Esophagus squamous epithelium (tissue), 5 donors: ENCODE measurements at regions of chr15 and their contacts with region 1.

Region 1: DNA sequence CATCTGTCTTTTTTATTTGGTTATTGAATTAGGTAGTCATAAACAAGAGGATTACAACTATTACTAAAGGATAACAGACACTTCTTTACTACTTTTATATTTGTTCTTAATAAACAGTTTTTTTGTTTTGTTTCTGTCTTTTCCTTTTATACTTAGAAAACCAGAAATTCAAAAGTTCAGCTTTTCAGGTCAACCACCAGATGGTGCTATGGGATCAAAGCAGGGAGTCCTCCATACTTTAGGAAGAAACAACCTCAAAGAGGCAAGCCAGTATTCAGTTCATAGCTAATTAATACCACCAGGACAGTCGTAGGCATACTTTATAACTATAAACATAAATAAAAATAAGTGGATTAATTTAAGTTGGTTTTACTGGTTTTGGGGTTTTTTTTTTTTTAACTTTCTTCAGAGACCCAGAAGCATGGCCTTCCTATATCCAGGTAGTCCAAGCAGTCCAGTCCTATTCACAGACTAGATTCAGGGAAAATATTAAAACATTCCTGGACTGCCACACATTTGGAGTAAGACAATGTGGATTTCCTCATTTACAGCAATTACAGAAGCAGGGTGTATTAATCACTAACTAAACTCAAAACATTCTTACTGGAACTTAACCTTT is 16.0 kb upstream of the EID1 start:
- DNase-seq: no peak
- H3K4me3 ChIP-seq: no peak overlapping the region
- H3K27ac ChIP-seq: no peak overlapping the region
- H3K4me1 ChIP-seq: no peaks in the 10 kb centered on the region
- H3K27me3 ChIP-seq: no peaks in the 10 kb centered on the region
- CTCF ChIP-seq: peak; percentile 69 to 92 (median 82)
- POLR2A ChIP-seq: no peak

Region 2: GRCh38 chr15:49145651-49146609 is 284.0 kb after region 1 on chr15:
- intact Hi-C with region 1: loop called (anchors 10 kb)
- DNase-seq: no peak
- H3K4me3 ChIP-seq: no peak overlapping the region
- H3K27ac ChIP-seq: no peak overlapping the region
- H3K4me1 ChIP-seq: peaks cover 3 to 48% (median 3%) of the 10 kb centered on the region in 3 donors
- H3K27me3 ChIP-seq: no peaks in the 10 kb centered on the region
- CTCF ChIP-seq: peak in 5 of 6 experiments; percentile 32 to 72 (median 34)
- POLR2A ChIP-seq: no peak

Region 3: GRCh38 chr15:50145451-50145872 is 1283.5 kb after region 1 on chr15:
- intact Hi-C with region 1: loop called (anchors 10 kb)
- DNase-seq: no peak
- H3K4me3 ChIP-seq: no peak overlapping the region
- H3K27ac ChIP-seq: no peak overlapping the region
- H3K4me1 ChIP-seq: peaks cover 0 to 33% (median 0%) of the 10 kb centered on the region in 3 donors
- H3K27me3 ChIP-seq: no peaks in the 10 kb centered on the region
- CTCF ChIP-seq: peak; percentile 41 to 72 (median 58)
- POLR2A ChIP-seq: no peak